IMR-90 (cell line): ENCODE measurements at regions of chr11 and their contacts with region 1.

Region 1: GRCh38 chr11:26219183-26220117 is 112.5 kb upstream of the ANO3 start:
- DNase-seq: peak; percentile 54
- ATAC-seq: peak; percentile 80
- H3K4me3 ChIP-seq: no peak overlapping the region
- H3K27ac ChIP-seq: peak overlapping the region; percentile 49; the same call in 1 of the 2 replicates
- H3K4me1 ChIP-seq: 0 out of 2 replicates have a peak, but pooled peaks cover 2% of the 10 kb centered on the region
- H3K27me3 ChIP-seq: no peaks in the 10 kb centered on the region
- CTCF ChIP-seq: no peak
- POLR2A ChIP-seq: no peak
- RAD21 ChIP-seq: no peak

Region 2: GRCh38 chr11:25970726-25971508 is 248.5 kb before region 1 on chr11:
- CTCF ChIA-PET with region 1: no interaction called
- POLR2A ChIA-PET with region 1: no interaction called
- dilution Hi-C with region 1: no loop called
- in situ Hi-C with region 1: no loop called
- intact Hi-C with region 1: no loop called
- DNase-seq: no peak
- ATAC-seq: no peak
- H3K4me3 ChIP-seq: no peak overlapping the region
- H3K27ac ChIP-seq: no peak overlapping the region
- H3K4me1 ChIP-seq: no peaks in the 10 kb centered on the region
- H3K27me3 ChIP-seq: no peaks in the 10 kb centered on the region
- CTCF ChIP-seq: no peak
- POLR2A ChIP-seq: no peak
- RAD21 ChIP-seq: no peak

Region 3: DNA sequence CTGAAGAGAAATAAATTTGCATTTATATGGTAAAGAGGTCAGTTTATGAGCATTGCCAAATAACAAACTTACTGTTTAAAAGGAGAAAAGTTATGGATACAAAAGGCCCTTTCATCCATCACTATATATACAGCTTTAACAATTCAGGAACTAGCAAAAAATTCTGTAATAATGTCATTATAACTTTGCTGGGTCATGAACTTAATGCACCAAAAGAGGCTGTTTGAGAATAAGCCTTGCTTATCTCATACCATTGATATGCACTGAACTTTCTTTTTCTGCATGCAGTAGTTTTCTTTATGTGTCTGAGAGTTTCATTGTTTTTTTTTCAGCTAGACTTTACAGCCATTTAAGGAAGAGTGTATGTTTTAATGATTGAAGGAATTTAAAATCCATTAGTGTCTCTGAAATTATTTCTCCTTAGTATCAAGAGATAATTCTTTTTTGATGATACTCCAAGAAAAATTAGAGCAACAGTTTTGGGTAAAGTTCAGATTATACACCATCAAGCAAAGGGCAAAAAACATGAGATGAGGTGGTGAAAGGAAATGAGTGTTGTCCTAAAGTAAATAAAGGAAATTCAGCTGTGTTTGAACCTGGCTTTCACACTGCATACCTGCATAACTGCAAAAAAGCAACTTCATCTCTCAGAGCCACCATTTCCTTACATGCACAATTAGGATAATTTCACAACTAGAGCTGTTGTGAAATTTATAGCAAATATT is 75.7 kb before region 1 on chr11:
- CTCF ChIA-PET with region 1: no interaction called
- POLR2A ChIA-PET with region 1: no interaction called
- dilution Hi-C with region 1: no loop called
- in situ Hi-C with region 1: no loop called
- intact Hi-C with region 1: loop called (anchors 2 kb)
- DNase-seq: peak; percentile 9
- ATAC-seq: peak; percentile 70
- H3K4me3 ChIP-seq: no peak overlapping the region
- H3K27ac ChIP-seq: peak overlapping the region; percentile 21; the same call in 1 of the 2 replicates
- H3K4me1 ChIP-seq: peaks cover 2% of the 10 kb centered on the region
- H3K27me3 ChIP-seq: no peaks in the 10 kb centered on the region
- CTCF ChIP-seq: no peak
- POLR2A ChIP-seq: no peak
- RAD21 ChIP-seq: no peak